ENCODE measurements at regions of chr2 and their contacts with region 1.

Region 1: GRCh38 chr2:117835990-117836760 is 21.7 kb downstream of the DDX18 start:
- DNase-seq: peak; percentile 72
- ATAC-seq: peak; percentile 85
- H3K4me3 Mint-ChIP-seq: peak overlapping the region; percentile 53
- H3K27ac Mint-ChIP-seq: no peak overlapping the region
- H3K4me1 Mint-ChIP-seq: peaks cover 12% of the 10 kb centered on the region
- H3K27me3 Mint-ChIP-seq: no peaks in the 10 kb centered on the region
- CTCF ChIP-seq: peak; percentile 47

Region 2: GRCh38 chr2:117027646-117028045 is 808.5 kb before region 1 on chr2:
- CTCF ChIA-PET with region 1: no interaction called
- POLR2A ChIA-PET with region 1: no interaction called
- intact Hi-C with region 1: no loop called
- DNase-seq: no peak
- ATAC-seq: no peak
- H3K4me3 Mint-ChIP-seq: no peak overlapping the region
- H3K27ac Mint-ChIP-seq: no peak overlapping the region
- H3K4me1 Mint-ChIP-seq: no peaks in the 10 kb centered on the region
- H3K27me3 Mint-ChIP-seq: no peaks in the 10 kb centered on the region
- CTCF ChIP-seq: no peak

Region 3: GRCh38 chr2:117814417-117815264 is 21.5 kb before region 1 on chr2 and contains the start of gene DDX18:
- CTCF ChIA-PET with region 1: interaction called, 9 read pairs
- POLR2A ChIA-PET with region 1: interaction called, 19 read pairs
- intact Hi-C with region 1: no loop called
- DNase-seq: peak; percentile 98
- ATAC-seq: peak; percentile 94
- H3K4me3 Mint-ChIP-seq: peak within 1 kb of the TSS; percentile 96
- H3K27ac Mint-ChIP-seq: peak within 1 kb of the TSS; percentile 96
- H3K4me1 Mint-ChIP-seq: peaks cover 38% of the 10 kb centered on the region
- H3K27me3 Mint-ChIP-seq: no peaks in the 10 kb centered on the region
- CTCF ChIP-seq: peak; percentile 98
- total RNA-seq, gene DDX18: 139 to 156 TPM

Region 4: GRCh38 chr2:117820444-117820843 is 15.7 kb before region 1 on chr2:
- CTCF ChIA-PET with region 1: no interaction called
- POLR2A ChIA-PET with region 1: interaction called, 19 read pairs
- intact Hi-C with region 1: no loop called
- DNase-seq: peak; percentile 70
- ATAC-seq: peak; percentile 99
- H3K4me3 Mint-ChIP-seq: no peak overlapping the region
- H3K27ac Mint-ChIP-seq: peak overlapping the region; percentile 77
- H3K4me1 Mint-ChIP-seq: peaks cover 52% of the 10 kb centered on the region
- H3K27me3 Mint-ChIP-seq: no peaks in the 10 kb centered on the region
- CTCF ChIP-seq: no peak

Region 5: DNA sequence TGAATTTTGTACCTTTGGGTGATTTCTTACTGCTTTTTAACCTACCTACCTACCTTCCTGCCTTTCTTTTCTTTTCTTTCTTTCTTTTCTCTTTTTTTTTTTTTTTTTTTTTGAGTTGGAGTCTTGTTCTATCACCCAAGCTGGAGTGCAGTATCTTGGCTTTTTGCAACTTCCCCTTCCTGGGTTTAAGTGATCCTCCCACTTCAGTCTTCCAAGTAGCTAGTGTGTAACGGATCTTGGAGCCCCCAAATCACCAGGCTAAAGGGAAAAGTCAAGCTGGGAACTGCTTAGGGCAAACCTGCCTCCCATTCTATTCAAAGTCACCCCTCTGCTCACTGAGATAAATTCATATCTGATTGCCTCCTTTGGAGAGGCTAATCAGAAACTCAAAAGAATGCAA is 39.6 kb after region 1 on chr2:
- CTCF ChIA-PET with region 1: no interaction called
- POLR2A ChIA-PET with region 1: no interaction called
- intact Hi-C with region 1: no loop called
- DNase-seq: no peak
- ATAC-seq: no peak
- H3K4me3 Mint-ChIP-seq: no peak overlapping the region
- H3K27ac Mint-ChIP-seq: no peak overlapping the region
- H3K4me1 Mint-ChIP-seq: no peaks in the 10 kb centered on the region
- H3K27me3 Mint-ChIP-seq: peaks cover 13% of the 10 kb centered on the region
- CTCF ChIP-seq: no peak